CD4-positive, alpha-beta T cell (primary cell): ENCODE measurements at regions of chr14 and their contacts with region 1.

Region 1: DNA sequence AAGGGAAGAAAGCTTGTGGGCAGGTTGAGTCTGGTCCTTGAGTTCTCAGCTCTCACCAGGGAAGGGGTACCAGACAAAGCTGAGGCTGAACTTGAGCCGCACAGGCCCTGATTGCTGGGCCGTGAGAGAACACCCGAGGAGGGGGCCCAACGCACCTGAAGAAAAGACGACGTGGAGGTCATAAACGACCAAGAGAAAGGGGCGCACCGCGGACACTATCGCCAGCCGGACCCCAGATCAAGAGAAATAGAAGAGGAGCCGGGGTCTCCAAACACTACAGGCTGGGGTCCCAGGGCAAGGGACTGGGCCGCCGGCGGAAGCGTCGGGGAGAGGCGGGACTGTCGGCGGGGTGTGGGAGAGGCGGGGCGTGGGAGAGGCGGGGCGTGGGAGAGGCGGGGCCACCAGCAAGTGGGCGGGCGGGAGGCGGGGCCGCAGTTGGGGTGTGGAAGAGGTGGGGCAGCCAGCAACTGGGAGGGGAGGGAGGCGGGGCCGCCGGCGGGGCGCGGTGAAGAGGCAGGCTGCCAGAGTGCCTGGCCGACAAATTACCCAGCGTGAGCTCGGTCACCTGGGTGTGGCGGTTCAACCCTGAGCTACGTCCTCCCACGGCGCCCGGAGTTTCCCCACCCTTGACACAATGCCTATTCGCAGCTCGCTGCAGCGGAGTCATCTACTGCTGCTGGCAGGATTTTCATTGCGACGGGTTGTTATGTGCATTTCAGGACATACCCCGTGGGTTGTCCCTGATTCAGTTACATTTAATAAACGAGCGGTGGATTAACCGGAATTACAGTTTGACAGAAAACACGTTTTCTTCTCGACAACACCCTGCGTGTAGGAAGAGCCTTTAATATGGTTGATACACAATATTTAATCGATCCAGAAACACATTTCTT is 15.5 kb upstream of the NEMF start:
- DNase-seq: peak; percentile 96 to 99 (median 98)
- ATAC-seq: peak; percentile 89
- H3K4me3 ChIP-seq: peak overlapping the region; percentile 63
- H3K4me3 Mint-ChIP-seq: peak overlapping the region; percentile 89
- H3K27ac ChIP-seq: peak overlapping the region; percentile 93
- H3K27ac Mint-ChIP-seq: peak overlapping the region; percentile 89
- H3K4me1 ChIP-seq: peaks cover 36% of the 10 kb centered on the region
- H3K4me1 Mint-ChIP-seq: peaks cover 14% of the 10 kb centered on the region
- H3K27me3 ChIP-seq: no peaks in the 10 kb centered on the region
- H3K27me3 Mint-ChIP-seq: no peaks in the 10 kb centered on the region
- CTCF ChIP-seq: no peak

Region 2: DNA sequence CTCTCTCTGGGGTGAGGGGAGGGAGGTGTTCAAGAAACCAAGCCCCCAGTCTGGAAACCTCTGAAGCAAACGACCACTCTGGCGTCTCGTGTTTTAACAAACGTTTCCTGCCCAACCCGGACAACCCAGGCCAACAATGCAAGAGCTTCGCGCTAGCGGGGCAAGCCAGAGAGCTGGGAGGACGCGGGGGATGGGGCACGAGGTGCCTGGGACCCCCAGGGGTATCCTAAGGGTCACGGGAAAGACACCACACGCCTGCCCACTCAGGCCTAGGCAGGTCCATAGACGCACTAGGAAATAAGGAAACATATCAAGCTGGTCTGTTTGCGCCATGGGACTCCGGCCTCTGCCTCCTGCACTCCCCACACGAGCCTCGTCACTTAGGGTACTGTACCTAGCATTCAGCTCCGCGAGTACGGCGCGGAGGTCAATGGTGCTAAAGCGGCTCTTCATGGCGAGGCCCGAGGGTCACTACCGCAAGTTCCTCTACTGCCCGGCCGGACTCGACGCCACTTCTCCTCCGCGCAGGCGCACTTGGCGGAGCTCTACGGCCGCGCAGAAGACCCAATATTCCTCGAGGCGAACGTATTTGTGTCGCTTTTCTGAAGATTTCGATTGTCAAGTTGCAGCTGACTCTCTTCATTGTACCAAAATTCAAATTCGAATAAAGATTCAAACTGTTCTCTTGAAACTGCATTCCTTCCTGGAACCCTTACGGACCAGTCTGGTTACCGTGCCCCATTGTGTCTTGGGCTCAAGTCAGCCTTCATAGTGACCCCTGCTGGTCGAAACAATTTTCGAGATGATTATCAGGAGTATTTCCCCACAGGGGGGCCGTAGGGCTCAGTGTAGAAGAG is 15.5 kb before region 1 on chr14 and contains the start of gene NEMF:
- CTCF ChIA-PET with region 1: interaction called, 121 read pairs
- POLR2A ChIA-PET with region 1: interaction called, 220 read pairs
- intact Hi-C with region 1: no loop called
- DNase-seq: peak; percentile 67 to 91 (median 72)
- ATAC-seq: peak; percentile 75
- H3K4me3 ChIP-seq: peak within 1 kb of the TSS; percentile 97
- H3K4me3 Mint-ChIP-seq: peak within 1 kb of the TSS; percentile 99
- H3K27ac ChIP-seq: peak within 1 kb of the TSS; percentile 64 to 80
- H3K27ac Mint-ChIP-seq: peak within 1 kb of the TSS; percentile 91
- H3K4me1 ChIP-seq: peaks cover 17% of the 10 kb centered on the region
- H3K4me1 Mint-ChIP-seq: peaks cover 46% of the 10 kb centered on the region
- H3K27me3 ChIP-seq: no peaks in the 10 kb centered on the region
- H3K27me3 Mint-ChIP-seq: no peaks in the 10 kb centered on the region
- CTCF ChIP-seq: peak; percentile 89
- total RNA-seq, gene NEMF: 96.0 to 97.7 TPM

Region 3: GRCh38 chr14:49892636-49893308 is 24.7 kb after region 1 on chr14 and contains the start of gene ARF6:
- CTCF ChIA-PET with region 1: interaction called, 10 read pairs
- POLR2A ChIA-PET with region 1: interaction called, 73 read pairs
- intact Hi-C with region 1: loop called (anchors 1 to 2 kb)
- DNase-seq: peak; percentile 86 to 98 (median 96)
- ATAC-seq: peak; percentile 69
- H3K4me3 ChIP-seq: peak within 1 kb of the TSS; percentile 96
- H3K4me3 Mint-ChIP-seq: peak within 1 kb of the TSS; percentile 98
- H3K27ac ChIP-seq: peak within 1 kb of the TSS; percentile 93 to 99
- H3K27ac Mint-ChIP-seq: peak within 1 kb of the TSS; percentile 96
- H3K4me1 ChIP-seq: peaks cover 19% of the 10 kb centered on the region
- H3K4me1 Mint-ChIP-seq: peaks cover 43% of the 10 kb centered on the region
- H3K27me3 ChIP-seq: no peaks in the 10 kb centered on the region
- H3K27me3 Mint-ChIP-seq: no peaks in the 10 kb centered on the region
- CTCF ChIP-seq: no peak
- total RNA-seq, gene ARF6: 67.2 to 69.7 TPM

Region 4: GRCh38 chr14:49977126-49977841 is 109.2 kb after region 1 on chr14:
- CTCF ChIA-PET with region 1: interaction called, 11 read pairs
- POLR2A ChIA-PET with region 1: interaction called, 86 read pairs
- intact Hi-C with region 1: no loop called
- DNase-seq: peak in 9 of 14 experiments; percentile 12 to 83 (median 40)
- ATAC-seq: peak; percentile 86
- H3K4me3 ChIP-seq: peak overlapping the region; percentile 41
- H3K4me3 Mint-ChIP-seq: peak overlapping the region; percentile 74
- H3K27ac ChIP-seq: peak overlapping the region; percentile 67 to 85
- H3K27ac Mint-ChIP-seq: peak overlapping the region; percentile 90
- H3K4me1 ChIP-seq: peaks cover 94% of the 10 kb centered on the region
- H3K4me1 Mint-ChIP-seq: peaks cover 83% of the 10 kb centered on the region
- H3K27me3 ChIP-seq: no peaks in the 10 kb centered on the region
- H3K27me3 Mint-ChIP-seq: no peaks in the 10 kb centered on the region
- CTCF ChIP-seq: no peak

Region 5: DNA sequence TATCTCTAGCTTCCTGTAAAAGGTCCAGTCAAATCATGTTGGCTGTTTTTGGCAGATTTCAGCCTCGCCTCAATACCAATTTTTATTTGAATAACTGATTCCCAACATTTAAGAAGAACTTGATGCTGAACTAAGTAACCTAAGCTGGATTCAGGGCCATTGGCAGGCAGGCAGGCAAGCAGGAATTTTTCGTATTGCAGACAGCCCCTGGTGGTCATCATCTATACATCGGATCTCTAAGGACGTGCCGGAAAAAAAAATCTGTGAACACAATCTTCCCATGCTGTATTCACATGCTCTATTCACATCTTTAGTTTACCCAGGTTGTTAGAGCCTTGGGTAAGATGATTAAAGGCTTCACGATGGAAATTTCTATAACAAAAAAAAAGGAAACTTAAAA is 241.3 kb after region 1 on chr14:
- CTCF ChIA-PET with region 1: interaction called, 10 read pairs
- POLR2A ChIA-PET with region 1: interaction called, 61 read pairs
- intact Hi-C with region 1: loop called in 1 of 2 experiments (anchors 1 kb)
- DNase-seq: no peak
- ATAC-seq: no peak
- H3K4me3 ChIP-seq: no peak overlapping the region
- H3K4me3 Mint-ChIP-seq: no peak overlapping the region
- H3K27ac ChIP-seq: no peak overlapping the region
- H3K27ac Mint-ChIP-seq: no peak overlapping the region
- H3K4me1 ChIP-seq: peaks cover under 1% of the 10 kb centered on the region
- H3K4me1 Mint-ChIP-seq: peaks cover 30% of the 10 kb centered on the region
- H3K27me3 ChIP-seq: no peaks in the 10 kb centered on the region
- H3K27me3 Mint-ChIP-seq: no peaks in the 10 kb centered on the region
- CTCF ChIP-seq: no peak

Region 6: GRCh38 chr14:50231475-50232275 is 363.6 kb after region 1 on chr14 and contains the start of gene SOS2:
- CTCF ChIA-PET with region 1: no interaction called
- POLR2A ChIA-PET with region 1: interaction called, 9 read pairs
- intact Hi-C with region 1: loop called (anchors 2 to 5 kb)
- DNase-seq: peak; percentile 66 to 91 (median 81)
- ATAC-seq: peak; percentile 80
- H3K4me3 ChIP-seq: peak within 1 kb of the TSS; percentile 85
- H3K4me3 Mint-ChIP-seq: peak within 1 kb of the TSS; percentile 91
- H3K27ac ChIP-seq: peak within 1 kb of the TSS; percentile 83 to 86
- H3K27ac Mint-ChIP-seq: peak within 1 kb of the TSS; percentile 92
- H3K4me1 ChIP-seq: peaks cover 24% of the 10 kb centered on the region
- H3K4me1 Mint-ChIP-seq: peaks cover 57% of the 10 kb centered on the region
- H3K27me3 ChIP-seq: no peaks in the 10 kb centered on the region
- H3K27me3 Mint-ChIP-seq: no peaks in the 10 kb centered on the region
- CTCF ChIP-seq: no peak
- total RNA-seq, gene SOS2: 53.8 to 56.7 TPM